Transverse colon (tissue), 4 donors: ENCODE measurements at regions of chr16 and their contacts with region 1.

Region 1: GRCh38 chr16:47699106-47699505 is 238.0 kb downstream of the PHKB start:
- DNase-seq: no peak
- H3K4me3 ChIP-seq: no peak overlapping the region
- H3K27ac ChIP-seq: no peak overlapping the region
- H3K4me1 ChIP-seq: no peaks in the 10 kb centered on the region
- H3K27me3 ChIP-seq: no peaks in the 10 kb centered on the region
- CTCF ChIP-seq: no peak
- EP300 ChIP-seq: no peak
- POLR2A ChIP-seq: no peak

Region 2: GRCh38 chr16:47431960-47432359 is 267.1 kb before region 1 on chr16:
- in situ Hi-C with region 1: no loop called
- intact Hi-C with region 1: loop called (anchors 10 kb)
- DNase-seq: no peak
- H3K4me3 ChIP-seq: no peak overlapping the region
- H3K27ac ChIP-seq: no peak overlapping the region
- H3K4me1 ChIP-seq: no peaks in the 10 kb centered on the region
- H3K27me3 ChIP-seq: no peaks in the 10 kb centered on the region
- CTCF ChIP-seq: no peak
- EP300 ChIP-seq: no peak
- POLR2A ChIP-seq: no peak